AG04450 (cell line): ENCODE measurements at regions of chr2 and their contacts with region 1.

Region 1: GRCh38 chr2:38535744-38536506 is 66.8 kb downstream of the HNRNPLL start:
- DNase-seq: no peak
- H3K4me3 ChIP-seq: peak overlapping the region; percentile 66
- H3K27ac ChIP-seq: no peak overlapping the region
- H3K27me3 ChIP-seq: no peaks in the 10 kb centered on the region
- CTCF ChIP-seq: peak; percentile 84

Region 2: DNA sequence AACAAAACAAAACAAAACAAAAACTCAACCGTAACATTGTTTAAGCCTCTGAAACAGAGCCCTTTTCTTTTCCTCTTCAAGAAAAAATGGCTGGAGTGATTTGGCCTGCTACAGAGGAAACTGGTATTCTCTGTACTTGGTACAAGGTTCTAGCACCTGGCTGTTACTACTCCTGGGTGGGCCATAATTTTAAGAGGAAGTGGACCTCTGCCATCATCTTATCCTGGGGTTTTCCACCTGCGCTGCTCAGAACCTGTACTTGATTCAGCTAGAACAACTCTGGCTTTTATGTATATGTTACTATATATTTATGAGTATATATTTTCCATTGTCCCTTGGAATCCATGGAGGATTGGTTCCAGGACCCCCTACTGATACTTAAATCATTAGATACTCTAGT is 192.8 kb after region 1 on chr2:
- CTCF ChIA-PET with region 1: interaction called, 21 read pairs
- POLR2A ChIA-PET with region 1: no interaction called
- DNase-seq: no peak
- H3K4me3 ChIP-seq: no peak overlapping the region
- H3K27ac ChIP-seq: no peak overlapping the region
- H3K27me3 ChIP-seq: no peaks in the 10 kb centered on the region
- CTCF ChIP-seq: no peak

Region 3: DNA sequence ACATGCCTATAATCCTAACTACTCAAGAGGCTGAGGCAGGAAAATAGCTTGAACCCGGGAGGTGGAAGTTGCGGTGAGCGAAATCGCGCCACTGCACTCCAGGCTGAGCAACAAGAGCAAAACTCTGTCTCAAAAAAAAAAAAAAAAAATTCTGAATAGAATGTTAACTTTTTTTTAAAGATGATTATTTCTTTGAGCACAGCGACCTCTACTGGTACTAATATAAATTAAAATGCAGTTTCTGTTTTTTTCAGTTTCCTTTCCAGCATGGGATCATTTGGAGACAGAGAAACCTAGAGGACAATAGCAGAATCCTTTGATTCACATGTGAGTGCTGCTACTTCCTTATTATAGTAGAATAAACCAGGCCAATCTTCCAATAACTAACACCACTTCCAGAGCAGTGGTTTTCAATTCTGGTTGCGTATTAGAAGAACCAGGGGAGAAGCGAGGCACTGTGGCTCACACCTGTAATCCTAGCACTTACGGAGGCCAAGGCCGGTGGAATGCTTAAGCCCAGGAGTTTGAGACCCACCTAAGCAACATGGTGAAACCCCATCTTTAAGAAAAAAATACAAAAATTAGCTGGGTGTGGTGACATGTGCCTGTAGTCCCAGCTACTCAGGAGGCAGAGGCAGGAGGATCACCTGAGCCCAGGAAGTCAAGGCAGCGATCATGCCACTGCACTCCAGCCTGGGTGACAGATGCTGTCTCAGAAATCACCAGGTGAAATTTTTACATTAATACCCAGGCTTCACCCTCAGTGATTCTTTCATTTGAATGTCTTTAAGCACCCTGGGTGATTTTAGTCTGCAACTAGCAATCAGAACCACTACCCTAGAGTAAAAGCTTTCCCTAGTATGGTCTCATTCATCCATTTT is 205.2 kb after region 1 on chr2:
- CTCF ChIA-PET with region 1: interaction called, 15 read pairs
- POLR2A ChIA-PET with region 1: no interaction called
- DNase-seq: no peak
- H3K4me3 ChIP-seq: no peak overlapping the region
- H3K27ac ChIP-seq: peak overlapping the region; percentile 34
- H3K27me3 ChIP-seq: no peaks in the 10 kb centered on the region
- CTCF ChIP-seq: peak; percentile 39